ENCODE measurements at regions of chr12 and their contacts with region 1.

Region 1: DNA sequence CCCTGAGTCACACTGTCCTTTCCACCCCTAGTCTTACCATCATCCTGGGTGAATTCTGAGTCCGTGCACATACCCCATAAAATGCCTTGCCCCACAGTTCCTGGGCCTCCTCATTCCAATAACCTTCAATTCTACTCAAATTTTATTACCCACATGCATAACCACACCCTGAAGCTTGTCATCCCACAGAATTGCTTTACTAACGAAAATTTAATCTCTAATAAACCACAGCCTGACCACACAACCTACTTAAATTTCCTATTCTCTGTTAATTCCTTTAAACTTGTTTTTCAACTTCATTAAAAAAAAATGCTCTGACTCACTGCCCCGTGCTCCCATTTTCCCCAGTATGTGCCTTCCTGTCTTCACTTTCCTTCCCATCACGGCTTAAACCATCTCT is 205.9 kb downstream of the PHLDA1 start:
- DNase-seq: peak; percentile 63
- H3K4me3 Mint-ChIP-seq: no peak overlapping the region
- H3K27ac Mint-ChIP-seq: no peak overlapping the region
- H3K4me1 Mint-ChIP-seq: no peaks in the 10 kb centered on the region
- H3K27me3 Mint-ChIP-seq: no peaks in the 10 kb centered on the region
- CTCF ChIP-seq: no peak

Region 2: DNA sequence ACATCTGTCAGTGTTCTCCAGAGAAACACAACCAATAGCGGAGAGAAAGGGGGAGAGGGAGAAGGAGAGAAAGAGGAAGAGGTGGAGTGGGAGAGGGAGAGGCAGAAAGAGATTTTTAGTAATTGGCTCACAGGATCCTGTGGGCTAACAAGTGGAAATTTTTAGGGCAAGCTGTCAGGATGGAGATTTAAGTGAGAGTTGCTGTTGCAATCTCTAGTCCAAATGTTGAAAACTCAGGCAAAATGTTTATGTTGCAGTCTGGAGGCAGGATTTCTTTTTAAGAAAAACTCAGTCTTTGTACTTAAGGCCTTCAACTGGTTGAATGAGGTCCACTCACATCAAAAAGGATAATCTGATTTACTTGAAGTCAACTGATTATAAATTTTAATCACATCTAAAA is 447.3 kb before region 1 on chr12:
- CTCF ChIA-PET with region 1: no interaction called
- intact Hi-C with region 1: no loop called
- DNase-seq: no peak
- H3K4me3 Mint-ChIP-seq: no peak overlapping the region
- H3K27ac Mint-ChIP-seq: no peak overlapping the region
- H3K4me1 Mint-ChIP-seq: no peaks in the 10 kb centered on the region
- H3K27me3 Mint-ChIP-seq: no peaks in the 10 kb centered on the region
- CTCF ChIP-seq: no peak

Region 3: GRCh38 chr12:75635606-75636410 is 189.9 kb before region 1 on chr12:
- CTCF ChIA-PET with region 1: no interaction called
- intact Hi-C with region 1: loop called (anchors 5 kb)
- DNase-seq: peak; percentile 41
- H3K4me3 Mint-ChIP-seq: no peak overlapping the region
- H3K27ac Mint-ChIP-seq: peak overlapping the region; percentile 80
- H3K4me1 Mint-ChIP-seq: peaks cover 64% of the 10 kb centered on the region
- H3K27me3 Mint-ChIP-seq: no peaks in the 10 kb centered on the region
- CTCF ChIP-seq: no peak

Region 4: GRCh38 chr12:75766263-75767160 is 59.2 kb before region 1 on chr12:
- CTCF ChIA-PET with region 1: no interaction called
- intact Hi-C with region 1: loop called (anchors 5 kb)
- DNase-seq: peak; percentile 63
- H3K4me3 Mint-ChIP-seq: no peak overlapping the region
- H3K27ac Mint-ChIP-seq: peak overlapping the region; percentile 73
- H3K4me1 Mint-ChIP-seq: peaks cover 60% of the 10 kb centered on the region
- H3K27me3 Mint-ChIP-seq: no peaks in the 10 kb centered on the region
- CTCF ChIP-seq: no peak

Region 5: GRCh38 chr12:75877763-75878621 is 52.3 kb after region 1 on chr12:
- CTCF ChIA-PET with region 1: no interaction called
- intact Hi-C with region 1: loop called (anchors 5 kb)
- DNase-seq: no peak
- H3K4me3 Mint-ChIP-seq: peak overlapping the region; percentile 52
- H3K27ac Mint-ChIP-seq: peak overlapping the region; percentile 83
- H3K4me1 Mint-ChIP-seq: peaks cover 50% of the 10 kb centered on the region
- H3K27me3 Mint-ChIP-seq: no peaks in the 10 kb centered on the region
- CTCF ChIP-seq: no peak

Region 6: GRCh38 chr12:75944097-75944904 is 118.6 kb after region 1 on chr12:
- CTCF ChIA-PET with region 1: no interaction called
- intact Hi-C with region 1: loop called (anchors 2 kb)
- DNase-seq: peak; percentile 44
- H3K4me3 Mint-ChIP-seq: peak overlapping the region; percentile 57
- H3K27ac Mint-ChIP-seq: peak overlapping the region; percentile 87
- H3K4me1 Mint-ChIP-seq: peaks cover 34% of the 10 kb centered on the region
- H3K27me3 Mint-ChIP-seq: no peaks in the 10 kb centered on the region
- CTCF ChIP-seq: no peak

Measured in Calu3 (cell line).